AG04450 (cell line): ENCODE measurements at regions of chr1 and their contacts with region 1.

Region 1: GRCh38 chr1:11907275-11908094 is 18.7 kb downstream of the KIAA2013 start:
- DNase-seq: peak; percentile 91
- H3K4me3 ChIP-seq: peak overlapping the region; percentile 18; the same call in 1 of the 2 replicates
- H3K27ac ChIP-seq: peak overlapping the region; percentile 99
- H3K27me3 ChIP-seq: no peaks in the 10 kb centered on the region
- CTCF ChIP-seq: peak; percentile 83

Region 2: DNA sequence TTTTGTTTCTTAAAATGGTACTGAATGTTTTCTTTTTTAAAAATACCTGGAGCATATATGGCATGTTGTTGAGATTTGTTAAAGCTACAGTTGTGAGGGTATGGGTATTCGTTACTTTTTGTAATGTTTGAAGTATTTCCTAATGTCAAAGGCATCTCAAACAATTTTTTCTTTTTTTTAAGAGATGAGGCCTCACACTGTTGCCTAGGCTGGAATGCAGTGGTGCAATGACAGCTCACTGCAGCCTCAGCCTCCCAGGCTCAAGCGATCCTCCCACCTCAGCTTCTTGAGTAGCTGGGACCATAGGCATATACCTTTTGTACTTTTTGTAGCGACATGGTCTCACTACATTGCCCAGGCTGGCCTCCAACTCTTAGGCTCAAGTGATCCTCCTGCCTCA is 85.4 kb before region 1 on chr1:
- CTCF ChIA-PET with region 1: interaction called, 6 read pairs
- POLR2A ChIA-PET with region 1: interaction called, 23 read pairs
- DNase-seq: no peak
- H3K4me3 ChIP-seq: no peak overlapping the region
- H3K27ac ChIP-seq: peak overlapping the region; percentile 57
- H3K27me3 ChIP-seq: no peaks in the 10 kb centered on the region
- CTCF ChIP-seq: no peak

Region 3: DNA sequence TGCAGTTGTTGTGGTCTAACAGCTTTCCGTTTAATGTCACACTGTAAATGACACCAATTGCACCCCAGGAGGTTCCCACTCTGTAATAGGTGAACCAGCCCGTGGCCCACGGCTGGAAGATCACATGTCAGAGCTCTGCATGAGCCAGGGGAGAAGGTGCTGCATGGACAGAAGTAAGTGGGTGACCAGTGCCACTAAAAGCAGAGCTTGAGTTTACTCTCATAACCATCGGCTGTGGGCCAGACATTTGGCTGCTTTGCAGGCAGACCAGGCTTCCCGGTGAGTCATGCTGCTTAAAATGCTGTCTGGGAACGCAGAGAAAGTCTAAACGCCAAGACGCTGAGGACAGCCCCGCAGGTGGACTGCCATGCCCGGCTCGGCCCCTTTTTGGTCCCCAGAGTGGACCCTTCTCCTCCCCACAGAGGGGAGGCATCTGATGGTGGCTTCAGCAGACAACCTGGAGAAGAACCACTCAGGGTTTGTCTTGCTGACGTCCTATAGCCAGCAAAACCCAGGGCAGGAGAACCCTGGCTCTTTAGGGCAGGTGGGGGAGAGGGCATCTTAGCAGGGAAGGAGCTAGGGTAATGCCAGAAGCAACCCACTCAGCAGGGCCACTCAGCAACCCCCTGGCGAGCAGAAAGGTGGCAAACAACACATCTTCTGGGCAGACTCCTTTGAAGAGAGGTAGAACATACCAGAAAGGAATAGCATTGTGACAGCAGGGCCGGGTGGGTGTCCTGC is 11.5 kb after region 1 on chr1:
- CTCF ChIA-PET with region 1: interaction called, 5 read pairs
- POLR2A ChIA-PET with region 1: interaction called, 50 read pairs
- DNase-seq: peak; percentile 57
- H3K4me3 ChIP-seq: no peak overlapping the region
- H3K27ac ChIP-seq: no peak overlapping the region
- H3K27me3 ChIP-seq: no peaks in the 10 kb centered on the region
- CTCF ChIP-seq: no peak

Region 4: DNA sequence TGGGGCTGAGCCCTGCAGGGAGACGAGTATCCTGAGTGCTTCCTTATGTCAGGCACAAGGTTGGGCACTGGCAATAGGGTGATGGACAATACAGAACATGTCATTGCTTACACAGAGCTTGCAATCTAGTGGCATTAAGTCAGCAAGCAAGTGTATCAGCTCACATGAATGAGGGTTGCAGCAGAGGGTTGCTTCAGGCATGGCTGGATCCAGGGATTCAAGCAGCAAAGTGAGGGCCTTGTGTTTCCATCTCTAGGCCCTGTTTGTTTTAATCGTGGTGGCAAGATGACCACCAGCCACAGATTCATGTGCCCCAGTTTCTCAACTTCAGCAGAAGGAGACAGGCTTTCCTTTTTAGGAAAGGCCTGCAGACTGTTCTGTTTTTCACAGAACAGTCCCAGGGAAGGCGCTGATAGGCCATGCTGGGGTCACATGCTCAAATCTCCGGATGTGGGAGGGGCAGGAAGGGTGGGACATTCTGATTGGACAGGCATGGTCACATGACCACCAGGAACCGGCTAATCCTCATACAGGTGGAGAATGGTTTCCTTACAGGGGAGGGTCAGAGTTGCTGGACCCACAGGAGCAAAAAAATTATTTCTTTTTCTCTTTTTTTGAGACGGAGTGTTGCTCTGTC is 41.5 kb after region 1 on chr1:
- CTCF ChIA-PET with region 1: no interaction called
- POLR2A ChIA-PET with region 1: interaction called, 14 read pairs
- DNase-seq: no peak
- H3K4me3 ChIP-seq: no peak overlapping the region
- H3K27ac ChIP-seq: no peak overlapping the region
- H3K27me3 ChIP-seq: no peaks in the 10 kb centered on the region
- CTCF ChIP-seq: no peak

Region 5: GRCh38 chr1:11979851-11980675 is 72.6 kb after region 1 on chr1 and contains the start of gene MFN2:
- CTCF ChIA-PET with region 1: interaction called, 4 read pairs
- POLR2A ChIA-PET with region 1: interaction called, 79 read pairs
- DNase-seq: peak; percentile 90
- H3K4me3 ChIP-seq: peak within 1 kb of the TSS; percentile 92
- H3K27ac ChIP-seq: peak within 1 kb of the TSS; percentile 81
- H3K27me3 ChIP-seq: no peaks in the 10 kb centered on the region
- CTCF ChIP-seq: no peak
- polyA plus RNA-seq, gene MFN2: 43.9 and 53.9 TPM in 2 replicates